Ovary (tissue), 10 donors: ENCODE measurements at regions of chr11 and their contacts with region 1.

Region 1: GRCh38 chr11:72642884-72643511 is 31.2 kb downstream of the PDE2A start:
- DNase-seq: peak; percentile 48 to 80 (median 67)
- H3K4me3 ChIP-seq: peak overlapping the region; percentile 36
- H3K27ac ChIP-seq: no peak overlapping the region
- H3K4me1 ChIP-seq: peaks cover 3% of the 10 kb centered on the region
- H3K27me3 ChIP-seq: no peaks in the 10 kb centered on the region
- CTCF ChIP-seq: peak; percentile 92 to 99 (median 96)
- EP300 ChIP-seq: no peak
- POLR2A ChIP-seq: no peak

Region 2: DNA sequence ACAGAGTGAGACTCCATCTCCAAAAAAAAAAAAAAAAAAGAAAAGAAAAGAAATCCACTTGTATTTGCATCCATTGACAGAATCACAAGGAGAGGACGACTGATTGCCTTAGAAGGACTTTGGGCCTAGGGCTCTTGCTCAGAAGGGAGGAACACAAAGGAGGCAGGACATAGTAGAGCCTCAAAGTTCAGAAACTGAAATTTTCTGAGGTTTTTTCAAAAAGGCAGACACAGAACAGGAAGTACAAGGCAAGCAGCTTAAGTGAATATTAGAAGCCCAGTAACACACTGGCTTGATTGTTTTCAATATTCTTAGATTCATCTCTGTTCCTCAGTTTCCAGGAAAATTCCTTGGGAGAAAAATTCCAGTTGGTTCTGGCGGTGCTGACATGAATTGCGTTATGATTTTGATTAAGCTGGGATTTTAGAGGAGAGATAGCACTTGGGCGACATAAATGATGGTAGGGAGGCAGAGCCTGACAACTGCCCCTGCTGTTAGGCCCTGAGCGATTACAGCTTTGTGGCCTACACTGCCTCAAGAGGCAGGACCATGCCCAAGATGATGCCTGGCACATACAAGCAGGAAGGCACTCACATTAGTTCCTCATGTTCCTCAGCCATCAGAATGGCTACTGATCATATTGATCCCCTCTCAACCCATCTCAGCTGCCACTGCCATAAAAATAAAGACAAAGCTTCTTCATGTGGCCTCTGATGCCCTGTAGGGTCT is 224.0 kb before region 1 on chr11:
- intact Hi-C with region 1: no loop called
- DNase-seq: no peak
- H3K4me3 ChIP-seq: no peak overlapping the region
- H3K27ac ChIP-seq: no peak overlapping the region
- H3K4me1 ChIP-seq: no peaks in the 10 kb centered on the region
- H3K27me3 ChIP-seq: no peaks in the 10 kb centered on the region
- CTCF ChIP-seq: no peak
- EP300 ChIP-seq: no peak
- POLR2A ChIP-seq: no peak

Region 3: DNA sequence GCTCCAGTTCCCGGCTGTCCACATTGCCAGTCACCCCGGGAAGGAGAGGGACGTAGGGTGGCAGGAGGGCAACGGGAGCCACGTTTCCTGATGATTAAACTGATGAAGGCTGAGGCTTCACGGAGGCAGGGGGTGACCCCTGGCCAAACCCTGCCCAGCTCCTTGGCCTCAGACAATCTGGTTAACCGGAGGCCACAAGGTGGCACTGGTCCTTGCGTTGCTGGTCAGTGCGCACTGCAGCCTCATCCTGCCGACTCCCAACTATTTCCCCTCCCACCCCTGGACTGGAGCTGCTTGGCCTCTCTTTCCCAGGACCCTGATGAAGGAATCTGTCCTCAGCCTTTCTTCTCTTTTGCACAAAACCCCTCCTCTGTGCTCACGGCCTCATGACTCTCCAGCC is 44.1 kb before region 1 on chr11:
- intact Hi-C with region 1: loop called in 1 of 4 experiments (anchors 2 kb)
- DNase-seq: peak; percentile 36 to 72 (median 49)
- H3K4me3 ChIP-seq: no peak overlapping the region
- H3K27ac ChIP-seq: no peak overlapping the region
- H3K4me1 ChIP-seq: no peaks in the 10 kb centered on the region
- H3K27me3 ChIP-seq: no peaks in the 10 kb centered on the region
- CTCF ChIP-seq: peak in 2 of 3 donors; percentile 31 to 32
- EP300 ChIP-seq: no peak
- POLR2A ChIP-seq: no peak

Region 4: DNA sequence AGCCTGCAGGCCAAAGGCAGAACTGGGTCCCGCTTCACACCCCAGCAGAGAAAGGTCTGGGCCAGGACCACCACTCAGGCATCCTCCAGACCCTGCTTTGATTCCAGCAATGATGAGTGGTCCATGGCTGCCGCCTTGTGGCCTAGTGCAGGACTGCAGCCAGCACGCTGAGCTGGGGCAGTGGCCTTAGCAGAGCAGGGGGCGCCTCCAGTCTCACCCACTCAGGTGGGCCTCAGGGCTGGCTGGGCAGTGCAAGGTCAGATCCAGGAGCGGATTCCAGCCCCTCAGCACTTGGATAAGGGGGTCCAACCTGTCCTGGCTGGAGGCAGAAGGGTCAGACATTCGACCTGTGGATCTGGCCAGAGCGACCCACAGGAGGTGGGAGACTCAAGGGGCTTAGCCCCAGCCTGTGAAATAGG is 40.8 kb after region 1 on chr11:
- intact Hi-C with region 1: no loop called
- DNase-seq: peak; percentile 49 to 82 (median 72)
- H3K4me3 ChIP-seq: no peak overlapping the region
- H3K27ac ChIP-seq: no peak overlapping the region
- H3K4me1 ChIP-seq: no peaks in the 10 kb centered on the region
- H3K27me3 ChIP-seq: no peaks in the 10 kb centered on the region
- CTCF ChIP-seq: peak; percentile 61 to 92 (median 86)
- EP300 ChIP-seq: no peak
- POLR2A ChIP-seq: no peak